OCI-LY7 (cell line): ENCODE measurements at regions of chr10 and their contacts with region 1.

Region 1: GRCh38 chr10:10020945-10021344 is 996.7 kb upstream of the CELF2 start:
- DNase-seq: no peak
- H3K4me3 ChIP-seq: no peak overlapping the region
- H3K27ac ChIP-seq: no peak overlapping the region
- H3K4me1 ChIP-seq: no peaks in the 10 kb centered on the region
- CTCF ChIP-seq: no peak

Region 2: DNA sequence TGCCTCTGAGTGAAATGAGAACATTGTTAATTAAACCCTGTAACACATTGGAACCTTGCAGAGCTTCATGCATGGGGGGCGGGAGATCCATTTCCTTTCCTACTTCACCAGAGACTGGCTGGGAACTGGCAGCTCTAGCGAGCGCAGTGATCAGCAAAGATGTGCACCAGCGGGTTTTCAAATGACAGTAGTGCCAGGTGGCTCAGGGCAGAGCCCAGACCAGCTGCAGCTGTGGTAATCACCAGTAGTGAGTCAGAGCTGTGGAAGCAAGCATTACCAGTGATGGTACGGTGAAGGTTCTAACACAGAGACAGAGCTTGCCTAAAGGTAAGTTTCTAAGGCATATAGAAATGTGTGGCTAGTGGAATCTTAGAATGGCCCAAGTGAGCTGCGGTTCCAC is 13.0 kb before region 1 on chr10:
- CTCF ChIA-PET with region 1: no interaction called
- POLR2A ChIA-PET with region 1: interaction called, 13 read pairs
- intact Hi-C with region 1: no loop called
- DNase-seq: peak; percentile 84
- H3K4me3 ChIP-seq: peak overlapping the region; percentile 35
- H3K27ac ChIP-seq: peak overlapping the region; percentile 62
- H3K4me1 ChIP-seq: peaks cover 36% of the 10 kb centered on the region
- CTCF ChIP-seq: no peak

Region 3: GRCh38 chr10:10332786-10333185 is 311.8 kb after region 1 on chr10:
- CTCF ChIA-PET with region 1: no interaction called
- POLR2A ChIA-PET with region 1: no interaction called
- intact Hi-C with region 1: no loop called
- DNase-seq: no peak
- H3K4me3 ChIP-seq: no peak overlapping the region
- H3K27ac ChIP-seq: no peak overlapping the region
- H3K4me1 ChIP-seq: no peaks in the 10 kb centered on the region
- CTCF ChIP-seq: no peak